ENCODE measurements at regions of chr7 and their contacts with region 1.

Region 1: GRCh38 chr7:101217388-101218235 is at the starts of genes PLOD3 and ZNHIT1:
- DNase-seq: peak; percentile 97
- ATAC-seq: peak; percentile 88
- H3K4me3 Mint-ChIP-seq: peak within 1 kb of the TSS; percentile 99
- H3K27ac Mint-ChIP-seq: peak within 1 kb of the TSS; percentile 85
- H3K4me1 Mint-ChIP-seq: peaks cover 31% of the 10 kb centered on the region
- H3K27me3 Mint-ChIP-seq: no peaks in the 10 kb centered on the region
- total RNA-seq, gene PLOD3: 30.7 to 35.9 TPM
- total RNA-seq, gene ZNHIT1: 44.2 TPM

Region 2: GRCh38 chr7:100889761-100890634 is 327.6 kb before region 1 on chr7:
- CTCF ChIA-PET with region 1: no interaction called
- POLR2A ChIA-PET with region 1: no interaction called
- intact Hi-C with region 1: loop called in 1 of 2 experiments (anchors 1 kb)
- DNase-seq: peak; percentile 96
- ATAC-seq: peak; percentile 95
- H3K4me3 Mint-ChIP-seq: peak overlapping the region; percentile 77
- H3K27ac Mint-ChIP-seq: no peak overlapping the region
- H3K4me1 Mint-ChIP-seq: peaks cover 38% of the 10 kb centered on the region
- H3K27me3 Mint-ChIP-seq: peaks cover 14% of the 10 kb centered on the region

Region 3: DNA sequence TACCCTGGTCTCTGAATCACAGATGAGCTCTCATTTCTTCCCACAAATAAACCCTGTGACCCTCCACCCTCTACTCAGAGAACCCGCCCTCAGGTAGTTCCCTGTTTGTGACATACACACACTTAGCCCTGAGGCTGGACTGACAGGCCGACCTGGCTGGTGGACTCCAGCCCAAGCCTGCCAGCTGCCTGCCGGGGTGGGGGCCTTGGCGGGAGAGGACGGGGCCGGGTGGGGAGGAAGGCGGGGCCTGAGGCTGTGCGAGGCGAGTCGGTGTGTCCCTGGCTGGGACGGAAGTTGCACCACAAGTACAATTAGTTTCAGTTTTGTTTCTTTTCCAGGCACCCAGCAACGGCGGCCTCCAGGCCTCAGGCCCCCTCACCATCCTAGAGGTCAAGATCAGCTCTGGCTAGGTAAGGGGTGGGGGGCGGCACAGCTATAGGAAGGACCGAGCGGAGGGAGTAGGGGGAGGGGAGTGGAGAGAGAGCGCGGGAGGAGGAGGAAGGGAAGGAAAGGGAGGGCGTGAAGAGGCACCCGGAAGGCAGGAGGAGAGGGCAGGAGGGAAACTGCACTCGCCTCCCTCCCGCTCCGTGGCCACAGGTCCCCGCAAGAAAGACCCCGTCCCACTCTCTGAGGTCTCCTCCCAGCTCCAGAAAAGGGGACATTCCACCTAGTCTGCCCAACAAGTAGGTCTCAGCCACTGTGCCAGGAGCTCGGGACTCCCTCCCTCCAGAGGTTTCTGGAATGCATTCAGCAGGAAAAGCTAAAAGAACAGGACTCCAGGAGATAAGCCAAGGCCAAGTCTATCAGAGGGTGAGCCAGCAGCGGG is 132.2 kb before region 1 on chr7 and contains the start of gene TRIM56:
- CTCF ChIA-PET with region 1: no interaction called
- POLR2A ChIA-PET with region 1: no interaction called
- intact Hi-C with region 1: loop called in 1 of 2 experiments (anchors 1 kb)
- DNase-seq: peak; percentile 88
- ATAC-seq: peak; percentile 90
- H3K4me3 Mint-ChIP-seq: peak within 1 kb of the TSS; percentile 94
- H3K27ac Mint-ChIP-seq: peak within 1 kb of the TSS; percentile 98
- H3K4me1 Mint-ChIP-seq: peaks cover 26% of the 10 kb centered on the region
- H3K27me3 Mint-ChIP-seq: no peaks in the 10 kb centered on the region
- total RNA-seq, gene TRIM56: 35.3 to 40.8 TPM

Region 4: GRCh38 chr7:101244375-101245146 is 26.9 kb after region 1 on chr7 and contains the start of gene FIS1:
- CTCF ChIA-PET with region 1: interaction called, 38 read pairs
- POLR2A ChIA-PET with region 1: interaction called, 7 read pairs
- intact Hi-C with region 1: loop called (anchors 1 kb)
- DNase-seq: peak; percentile 97
- ATAC-seq: peak; percentile 96
- H3K4me3 Mint-ChIP-seq: peak within 1 kb of the TSS; percentile 97
- H3K27ac Mint-ChIP-seq: peak within 1 kb of the TSS; percentile 97
- H3K4me1 Mint-ChIP-seq: peaks cover 25% of the 10 kb centered on the region
- H3K27me3 Mint-ChIP-seq: no peaks in the 10 kb centered on the region
- total RNA-seq, gene FIS1: 70.5 to 92.6 TPM

Region 5: GRCh38 chr7:101251871-101252659 is 34.5 kb after region 1 on chr7:
- CTCF ChIA-PET with region 1: interaction called, 11 read pairs
- POLR2A ChIA-PET with region 1: interaction called, 3 read pairs
- intact Hi-C with region 1: loop called (anchors 1 to 2 kb)
- DNase-seq: peak; percentile 99
- ATAC-seq: peak; percentile 100
- H3K4me3 Mint-ChIP-seq: peak overlapping the region; percentile 96
- H3K27ac Mint-ChIP-seq: peak overlapping the region; percentile 96
- H3K4me1 Mint-ChIP-seq: peaks cover 26% of the 10 kb centered on the region
- H3K27me3 Mint-ChIP-seq: peaks cover 5% of the 10 kb centered on the region

Region 6: DNA sequence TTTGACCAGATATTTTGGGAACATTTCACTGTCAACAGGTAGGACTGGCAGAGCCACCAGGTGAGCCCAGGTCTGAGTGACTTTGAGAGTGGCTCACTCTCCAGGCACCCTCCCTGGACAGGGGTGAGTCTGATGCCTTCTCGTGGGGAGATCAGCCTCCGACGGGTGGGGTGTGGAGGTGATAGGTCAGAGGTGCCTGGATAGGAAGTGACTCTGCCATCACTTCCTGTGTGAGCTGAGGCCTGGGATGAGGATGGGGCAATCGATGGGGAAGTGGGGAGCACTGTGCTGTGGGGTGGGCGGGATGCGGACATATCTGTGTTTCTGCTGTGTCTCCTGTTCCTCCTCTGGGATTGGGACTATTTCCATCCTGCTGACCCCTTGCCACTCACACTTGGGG is 69.4 kb after region 1 on chr7:
- CTCF ChIA-PET with region 1: interaction called, 9 read pairs
- POLR2A ChIA-PET with region 1: no interaction called
- intact Hi-C with region 1: loop called (anchors 1 to 10 kb)
- DNase-seq: peak; percentile 6
- ATAC-seq: no peak
- H3K4me3 Mint-ChIP-seq: no peak overlapping the region
- H3K27ac Mint-ChIP-seq: no peak overlapping the region
- H3K4me1 Mint-ChIP-seq: peaks cover 14% of the 10 kb centered on the region
- H3K27me3 Mint-ChIP-seq: peaks cover 10% of the 10 kb centered on the region

Region 7: DNA sequence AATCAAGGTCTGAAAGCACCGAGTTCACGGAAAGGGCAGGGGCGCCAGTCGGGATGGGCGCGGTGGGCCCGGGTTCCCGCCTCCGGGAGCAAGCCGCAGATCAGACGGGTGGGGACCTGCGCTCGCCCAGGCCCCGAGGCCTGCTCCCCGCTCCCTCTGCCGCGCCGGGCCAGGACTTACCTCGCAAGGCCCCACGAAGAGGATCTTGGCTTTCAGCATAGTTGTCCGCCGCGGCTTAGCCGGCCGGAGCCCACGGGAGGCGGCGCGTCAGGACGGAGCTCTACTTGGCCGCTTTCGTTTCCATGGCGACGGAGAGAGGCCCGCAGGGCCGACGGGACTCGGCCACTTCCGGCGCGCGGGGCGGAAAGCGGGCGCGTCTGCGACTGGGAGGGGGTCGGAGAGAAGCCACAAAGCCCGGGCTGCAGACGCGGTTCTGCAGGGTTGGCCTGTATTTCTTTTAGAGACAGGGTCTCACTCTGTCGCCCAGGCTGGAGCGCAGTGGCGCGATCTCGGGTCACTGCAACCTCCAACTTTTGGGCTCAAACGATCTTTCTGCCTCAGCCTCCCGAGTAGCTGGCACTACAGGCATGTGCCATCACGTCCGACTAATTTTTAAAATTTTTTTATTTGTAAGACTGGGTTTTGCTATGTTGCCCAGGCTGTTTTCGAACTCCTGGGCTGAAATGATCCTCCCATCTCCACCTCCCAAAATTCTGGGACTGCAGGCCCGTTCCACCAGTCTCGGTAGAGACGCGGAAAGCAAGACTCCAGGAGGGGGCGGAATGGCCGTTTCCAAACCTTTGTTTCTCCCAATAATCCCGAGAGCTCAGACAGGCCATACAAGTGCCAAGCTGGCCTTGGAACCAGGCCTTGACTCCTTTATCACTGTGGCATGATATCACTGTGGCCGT is 104.1 kb after region 1 on chr7 and contains the start of gene IFT22:
- CTCF ChIA-PET with region 1: no interaction called
- POLR2A ChIA-PET with region 1: no interaction called
- intact Hi-C with region 1: loop called in 1 of 2 experiments (anchors 1 kb)
- DNase-seq: peak; percentile 93
- ATAC-seq: peak; percentile 97
- H3K4me3 Mint-ChIP-seq: peak within 1 kb of the TSS; percentile 82
- H3K27ac Mint-ChIP-seq: peak within 1 kb of the TSS; percentile 89
- H3K4me1 Mint-ChIP-seq: peaks cover 8% of the 10 kb centered on the region
- H3K27me3 Mint-ChIP-seq: no peaks in the 10 kb centered on the region
- total RNA-seq, gene IFT22: 6.0 to 6.7 TPM